Caco-2 (cell line): ENCODE measurements at regions of chrX and their contacts with region 1.

Region 1: GRCh38 chrX:115226929-115227328 is 7.0 kb downstream of the LRCH2 start:
- DNase-seq: peak; percentile 38
- H3K4me3 ChIP-seq: no peak overlapping the region
- H3K4me3 Mint-ChIP-seq: no peak overlapping the region
- H3K27ac Mint-ChIP-seq: no peak overlapping the region
- H3K4me1 ChIP-seq: no peaks in the 10 kb centered on the region
- H3K4me1 Mint-ChIP-seq: no peaks in the 10 kb centered on the region
- H3K27me3 ChIP-seq: no peaks in the 10 kb centered on the region
- H3K27me3 Mint-ChIP-seq: peaks cover 3% of the 10 kb centered on the region
- CTCF ChIP-seq: peak; percentile 35 to 74

Region 2: DNA sequence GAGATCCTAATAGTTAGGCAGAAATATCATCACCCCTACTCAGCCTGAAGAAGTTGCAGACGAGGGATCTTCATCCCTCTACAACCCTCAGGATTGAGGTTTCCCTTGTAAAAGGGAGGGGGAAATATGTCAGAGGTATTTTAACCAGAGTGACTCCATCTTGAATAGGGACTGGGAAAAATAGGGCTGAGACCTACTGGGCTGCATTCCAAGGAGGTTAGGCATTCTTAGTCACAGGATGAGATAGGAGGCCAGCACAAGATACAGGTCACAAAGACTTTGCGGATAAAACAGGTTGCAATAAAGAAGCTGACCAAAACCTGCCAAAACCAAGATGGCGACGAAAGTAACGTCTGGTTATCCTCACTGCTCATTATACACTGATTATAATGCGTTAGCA is 227.0 kb before region 1 on chrX:
- CTCF ChIA-PET with region 1: no interaction called
- POLR2A ChIA-PET with region 1: no interaction called
- intact Hi-C with region 1: no loop called
- DNase-seq: no peak
- H3K4me3 ChIP-seq: no peak overlapping the region
- H3K4me3 Mint-ChIP-seq: no peak overlapping the region
- H3K27ac Mint-ChIP-seq: no peak overlapping the region
- H3K4me1 ChIP-seq: no peaks in the 10 kb centered on the region
- H3K4me1 Mint-ChIP-seq: no peaks in the 10 kb centered on the region
- H3K27me3 ChIP-seq: no peaks in the 10 kb centered on the region
- H3K27me3 Mint-ChIP-seq: no peaks in the 10 kb centered on the region
- CTCF ChIP-seq: no peak

Region 3: DNA sequence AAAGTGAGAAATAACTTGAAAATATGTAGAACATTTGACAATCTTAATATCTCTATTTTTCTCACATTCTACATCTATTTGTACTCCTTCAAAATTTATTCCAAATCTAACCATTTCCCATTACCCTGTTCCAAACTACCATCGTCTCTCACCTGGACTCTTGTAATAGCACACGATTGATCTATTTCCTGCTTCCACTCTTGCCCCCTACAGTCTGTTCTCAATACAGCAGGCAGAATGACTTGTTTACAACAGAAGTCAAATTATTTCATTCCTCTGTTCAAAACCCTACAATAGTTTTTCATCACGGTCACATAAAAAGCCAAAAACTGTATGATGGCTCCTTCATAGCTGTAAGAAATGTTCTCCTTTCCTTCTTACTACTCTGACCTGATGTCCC is 41.5 kb after region 1 on chrX:
- CTCF ChIA-PET with region 1: no interaction called
- POLR2A ChIA-PET with region 1: no interaction called
- intact Hi-C with region 1: loop called (anchors 1 kb)
- DNase-seq: peak in 1 of 2 experiments; percentile 4
- H3K4me3 ChIP-seq: no peak overlapping the region
- H3K4me3 Mint-ChIP-seq: no peak overlapping the region
- H3K27ac Mint-ChIP-seq: no peak overlapping the region
- H3K4me1 ChIP-seq: no peaks in the 10 kb centered on the region
- H3K4me1 Mint-ChIP-seq: no peaks in the 10 kb centered on the region
- H3K27me3 ChIP-seq: no peaks in the 10 kb centered on the region
- H3K27me3 Mint-ChIP-seq: no peaks in the 10 kb centered on the region
- CTCF ChIP-seq: peak in 1 of 2 experiments; percentile 29

Region 4: GRCh38 chrX:115284877-115285276 is 57.9 kb after region 1 on chrX:
- CTCF ChIA-PET with region 1: interaction called, 5 read pairs
- POLR2A ChIA-PET with region 1: no interaction called
- intact Hi-C with region 1: loop called (anchors 1 kb)
- DNase-seq: no peak
- H3K4me3 ChIP-seq: no peak overlapping the region
- H3K4me3 Mint-ChIP-seq: no peak overlapping the region
- H3K27ac Mint-ChIP-seq: no peak overlapping the region
- H3K4me1 ChIP-seq: no peaks in the 10 kb centered on the region
- H3K4me1 Mint-ChIP-seq: no peaks in the 10 kb centered on the region
- H3K27me3 ChIP-seq: no peaks in the 10 kb centered on the region
- H3K27me3 Mint-ChIP-seq: peaks cover 6% of the 10 kb centered on the region
- CTCF ChIP-seq: no peak

Region 5: GRCh38 chrX:115642895-115643530 is 416.1 kb after region 1 on chrX:
- CTCF ChIA-PET with region 1: no interaction called
- POLR2A ChIA-PET with region 1: no interaction called
- intact Hi-C with region 1: loop called (anchors 1 kb)
- DNase-seq: peak in 1 of 2 experiments; percentile 48
- H3K4me3 ChIP-seq: no peak overlapping the region
- H3K4me3 Mint-ChIP-seq: no peak overlapping the region
- H3K27ac Mint-ChIP-seq: no peak overlapping the region
- H3K4me1 ChIP-seq: no peaks in the 10 kb centered on the region
- H3K4me1 Mint-ChIP-seq: peaks cover 10% of the 10 kb centered on the region
- H3K27me3 ChIP-seq: no peaks in the 10 kb centered on the region
- H3K27me3 Mint-ChIP-seq: no peaks in the 10 kb centered on the region
- CTCF ChIP-seq: peak; percentile 54 to 66

Region 6: DNA sequence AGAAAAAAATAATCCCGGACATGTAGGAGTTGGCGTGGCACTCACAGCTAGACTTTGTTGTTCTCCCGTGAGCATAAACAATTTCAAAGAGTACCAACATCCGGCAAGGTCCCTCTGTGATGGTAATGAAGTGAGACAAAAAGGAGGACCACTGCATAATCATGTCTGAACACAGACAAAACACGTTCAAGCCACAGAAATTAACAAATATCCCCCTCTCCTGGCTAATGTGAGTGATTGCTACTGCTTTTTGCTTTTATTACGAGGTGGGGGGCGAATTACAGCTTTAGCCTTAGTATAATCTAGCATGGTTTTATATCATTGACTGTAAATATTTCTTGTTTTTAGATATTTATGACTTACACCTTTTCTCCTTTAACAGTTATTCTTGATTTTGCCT is 452.5 kb after region 1 on chrX:
- CTCF ChIA-PET with region 1: no interaction called
- POLR2A ChIA-PET with region 1: no interaction called
- intact Hi-C with region 1: loop called (anchors 2 kb)
- DNase-seq: peak in 1 of 2 experiments; percentile 8
- H3K4me3 ChIP-seq: no peak overlapping the region
- H3K4me3 Mint-ChIP-seq: no peak overlapping the region
- H3K27ac Mint-ChIP-seq: no peak overlapping the region
- H3K4me1 ChIP-seq: no peaks in the 10 kb centered on the region
- H3K4me1 Mint-ChIP-seq: no peaks in the 10 kb centered on the region
- H3K27me3 ChIP-seq: no peaks in the 10 kb centered on the region
- H3K27me3 Mint-ChIP-seq: no peaks in the 10 kb centered on the region
- CTCF ChIP-seq: peak; percentile 33 to 36

Region 7: DNA sequence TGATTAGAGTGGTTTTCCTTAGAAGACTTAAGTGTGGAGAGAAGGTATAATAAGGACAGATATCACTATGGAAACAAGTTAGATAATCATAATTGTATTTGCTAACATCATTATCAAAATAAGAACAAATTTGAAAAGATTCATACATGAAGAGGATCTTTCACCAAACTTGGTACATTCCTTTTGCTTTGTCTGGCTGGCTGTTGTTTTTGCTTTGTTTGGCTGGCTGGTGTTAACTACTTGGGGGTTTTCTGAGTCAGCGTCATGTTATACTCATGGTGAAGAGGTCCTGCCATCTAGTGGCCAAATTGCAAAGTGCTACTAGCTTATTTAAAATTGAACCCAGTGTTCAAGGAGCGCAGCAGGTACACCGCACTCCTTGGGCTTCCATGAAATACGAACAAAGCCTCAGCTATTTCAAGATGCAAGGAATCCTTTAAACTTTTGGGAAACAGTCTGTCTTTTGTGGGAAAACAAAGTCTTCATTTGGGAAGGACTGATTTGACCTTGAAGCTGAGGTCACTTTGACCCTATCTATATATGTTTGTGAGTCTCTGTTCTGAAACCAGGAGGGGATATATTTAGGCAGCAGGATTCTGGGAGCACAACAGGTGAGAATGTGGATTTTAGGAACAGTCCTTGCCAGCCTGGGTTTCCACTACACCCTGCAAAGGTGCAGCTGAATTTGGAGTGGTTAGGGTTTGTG is 463.7 kb after region 1 on chrX:
- CTCF ChIA-PET with region 1: no interaction called
- POLR2A ChIA-PET with region 1: no interaction called
- intact Hi-C with region 1: loop called (anchors 1 kb)
- DNase-seq: peak; percentile 47 to 53
- H3K4me3 ChIP-seq: no peak overlapping the region
- H3K4me3 Mint-ChIP-seq: no peak overlapping the region
- H3K27ac Mint-ChIP-seq: peak overlapping the region; percentile 48
- H3K4me1 ChIP-seq: no peaks in the 10 kb centered on the region
- H3K4me1 Mint-ChIP-seq: no peaks in the 10 kb centered on the region
- H3K27me3 ChIP-seq: no peaks in the 10 kb centered on the region
- H3K27me3 Mint-ChIP-seq: no peaks in the 10 kb centered on the region
- CTCF ChIP-seq: peak; percentile 60 to 69